ENCODE measurements at regions of chr20 and their contacts with region 1.

Region 1: GRCh38 chr20:2451939-2452732 is 18.5 kb downstream of the SNRPB start:
- DNase-seq: peak; percentile 54
- ATAC-seq: peak; percentile 85
- H3K4me3 ChIP-seq: no peak overlapping the region
- H3K27ac ChIP-seq: no peak overlapping the region
- H3K4me1 ChIP-seq: no peaks in the 10 kb centered on the region
- H3K27me3 ChIP-seq: peaks cover 5% of the 10 kb centered on the region; the same call in 1 of the 2 replicates
- CTCF ChIP-seq: peak; percentile 95

Region 2: GRCh38 chr20:1965520-1966351 is 486.4 kb before region 1 on chr20:
- CTCF ChIA-PET with region 1: no interaction called
- POLR2A ChIA-PET with region 1: no interaction called
- in situ Hi-C with region 1: no loop called
- intact Hi-C with region 1: loop called (anchors 10 kb)
- DNase-seq: peak; percentile 18
- ATAC-seq: peak; percentile 94
- H3K4me3 ChIP-seq: no peak overlapping the region; a peak in 1 of 4 replicates
- H3K27ac ChIP-seq: no peak overlapping the region
- H3K4me1 ChIP-seq: no peaks in the 10 kb centered on the region
- H3K27me3 ChIP-seq: peaks cover 16% of the 10 kb centered on the region
- CTCF ChIP-seq: peak; percentile 97

Region 3: DNA sequence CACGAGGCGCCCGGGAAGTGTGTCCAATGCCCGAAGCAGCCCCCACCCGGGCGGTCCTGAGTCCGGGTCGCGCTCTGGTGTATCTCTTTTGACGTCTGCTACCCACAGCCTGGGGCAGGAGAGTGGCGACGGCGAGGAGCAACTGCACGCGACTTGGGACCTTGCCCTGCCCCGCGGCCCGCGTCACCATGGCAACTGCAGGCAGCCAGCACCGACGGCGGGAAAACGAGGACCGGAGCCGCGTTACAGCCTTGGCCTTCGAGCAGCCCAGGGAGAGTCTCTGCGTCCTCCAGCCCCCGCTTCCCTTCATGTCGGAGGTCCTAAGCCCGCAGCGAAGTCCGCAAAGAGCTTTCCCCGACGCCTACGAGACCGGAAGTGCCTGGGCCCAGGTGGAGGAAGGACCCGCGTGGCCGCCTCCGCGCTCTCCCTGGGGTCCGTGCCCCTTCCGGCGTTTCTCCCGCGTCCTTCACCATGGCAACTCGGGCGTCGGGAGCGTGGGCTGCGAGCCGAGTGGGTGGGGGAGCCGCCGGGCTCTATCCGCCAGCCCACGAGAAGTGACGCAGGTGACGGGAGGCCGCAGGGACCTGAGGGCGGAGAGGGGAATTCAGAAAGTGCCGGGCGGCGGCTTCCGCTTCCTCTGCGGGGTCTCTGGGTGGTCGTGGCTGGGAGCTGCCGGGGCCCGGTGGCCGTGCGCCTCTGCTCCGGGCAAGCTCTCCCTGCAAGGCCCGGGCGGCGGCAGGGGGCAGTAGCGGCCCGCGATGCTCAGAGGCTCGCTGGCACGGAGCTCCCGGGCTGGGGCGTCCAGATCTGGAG is 245.0 kb before region 1 on chr20:
- CTCF ChIA-PET with region 1: interaction called, 10 read pairs
- POLR2A ChIA-PET with region 1: interaction called, 5 read pairs
- in situ Hi-C with region 1: no loop called
- intact Hi-C with region 1: loop called (anchors 2 kb)
- DNase-seq: no peak
- ATAC-seq: peak; percentile 97
- H3K4me3 ChIP-seq: peak overlapping the region; percentile 47 to 63
- H3K27ac ChIP-seq: no peak overlapping the region
- H3K4me1 ChIP-seq: no peaks in the 10 kb centered on the region
- H3K27me3 ChIP-seq: peaks cover 23% of the 10 kb centered on the region
- CTCF ChIP-seq: peak; percentile 93

Region 4: GRCh38 chr20:2350606-2351005 is 101.5 kb before region 1 on chr20:
- CTCF ChIA-PET with region 1: no interaction called
- POLR2A ChIA-PET with region 1: no interaction called
- in situ Hi-C with region 1: no loop called
- intact Hi-C with region 1: loop called (anchors 1 kb)
- DNase-seq: no peak
- ATAC-seq: no peak
- H3K4me3 ChIP-seq: no peak overlapping the region
- H3K27ac ChIP-seq: no peak overlapping the region
- H3K4me1 ChIP-seq: no peaks in the 10 kb centered on the region
- H3K27me3 ChIP-seq: peaks cover 6% of the 10 kb centered on the region; the same call in 1 of the 2 replicates
- CTCF ChIP-seq: no peak

Region 5: GRCh38 chr20:2365666-2366065 is 86.5 kb before region 1 on chr20:
- CTCF ChIA-PET with region 1: no interaction called
- POLR2A ChIA-PET with region 1: no interaction called
- in situ Hi-C with region 1: no loop called
- intact Hi-C with region 1: no loop called
- DNase-seq: no peak
- ATAC-seq: no peak
- H3K4me3 ChIP-seq: no peak overlapping the region
- H3K27ac ChIP-seq: no peak overlapping the region
- H3K4me1 ChIP-seq: no peaks in the 10 kb centered on the region
- H3K27me3 ChIP-seq: peaks cover 4% of the 10 kb centered on the region
- CTCF ChIP-seq: no peak

Region 6: DNA sequence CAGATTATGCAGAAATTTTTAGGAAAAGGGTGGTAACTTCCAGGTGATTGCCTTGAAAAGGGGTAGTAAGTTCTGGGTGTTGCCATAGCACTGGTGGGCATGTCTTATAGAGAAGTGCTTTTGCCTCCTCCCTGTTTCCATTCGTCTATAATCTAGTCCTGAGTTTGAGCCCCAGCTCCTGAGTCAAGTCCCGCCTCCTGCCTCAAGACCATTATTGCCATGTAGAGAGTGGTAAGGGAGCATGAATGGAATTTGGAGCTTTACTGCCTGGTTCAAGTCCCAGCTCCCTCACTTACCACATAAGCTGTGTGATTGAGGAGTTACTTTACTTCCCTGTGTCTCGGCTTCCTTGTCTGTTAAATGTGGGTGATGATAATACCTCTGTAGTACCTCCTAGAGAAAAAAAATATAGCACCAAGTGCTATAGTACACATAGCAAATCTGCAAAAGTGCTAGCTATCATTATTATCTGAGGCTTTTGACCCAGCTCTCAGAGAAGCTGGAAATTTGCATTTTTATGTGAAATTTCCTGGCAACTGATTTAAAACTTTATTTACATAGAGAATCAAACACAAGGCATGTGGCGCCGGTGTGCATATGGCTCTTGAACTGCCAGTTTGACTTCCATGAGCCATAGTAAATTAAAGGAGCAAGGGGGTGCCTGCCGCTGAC is 35.5 kb before region 1 on chr20:
- CTCF ChIA-PET with region 1: no interaction called
- POLR2A ChIA-PET with region 1: no interaction called
- in situ Hi-C with region 1: no loop called
- intact Hi-C with region 1: loop called (anchors 5 kb)
- DNase-seq: no peak
- ATAC-seq: no peak
- H3K4me3 ChIP-seq: no peak overlapping the region
- H3K27ac ChIP-seq: no peak overlapping the region
- H3K4me1 ChIP-seq: no peaks in the 10 kb centered on the region
- H3K27me3 ChIP-seq: no peaks in the 10 kb centered on the region
- CTCF ChIP-seq: no peak

Measured in Panc1 (cell line).